ENCODE measurements at regions of chr6 and their contacts with region 1.

Region 1: GRCh38 chr6:108052706-108053105 is 21.8 kb downstream of the OSTM1 start:
- DNase-seq: no peak
- H3K4me3 Mint-ChIP-seq: no peak overlapping the region
- H3K27ac Mint-ChIP-seq: no peak overlapping the region
- H3K4me1 Mint-ChIP-seq: no peaks in the 10 kb centered on the region
- H3K27me3 Mint-ChIP-seq: no peaks in the 10 kb centered on the region

Region 2: GRCh38 chr6:107866606-107867301 is 186.0 kb before region 1 on chr6:
- intact Hi-C with region 1: loop called (anchors 1 kb)
- DNase-seq: peak; percentile 81
- H3K4me3 Mint-ChIP-seq: no peak overlapping the region
- H3K27ac Mint-ChIP-seq: no peak overlapping the region
- H3K4me1 Mint-ChIP-seq: peaks cover 16% of the 10 kb centered on the region
- H3K27me3 Mint-ChIP-seq: peaks cover 4% of the 10 kb centered on the region

Region 3: GRCh38 chr6:107977283-107977682 is 75.4 kb before region 1 on chr6:
- intact Hi-C with region 1: loop called (anchors 1 kb)
- DNase-seq: no peak
- H3K4me3 Mint-ChIP-seq: no peak overlapping the region
- H3K27ac Mint-ChIP-seq: no peak overlapping the region
- H3K4me1 Mint-ChIP-seq: peaks cover 5% of the 10 kb centered on the region
- H3K27me3 Mint-ChIP-seq: peaks cover 21% of the 10 kb centered on the region

Region 4: DNA sequence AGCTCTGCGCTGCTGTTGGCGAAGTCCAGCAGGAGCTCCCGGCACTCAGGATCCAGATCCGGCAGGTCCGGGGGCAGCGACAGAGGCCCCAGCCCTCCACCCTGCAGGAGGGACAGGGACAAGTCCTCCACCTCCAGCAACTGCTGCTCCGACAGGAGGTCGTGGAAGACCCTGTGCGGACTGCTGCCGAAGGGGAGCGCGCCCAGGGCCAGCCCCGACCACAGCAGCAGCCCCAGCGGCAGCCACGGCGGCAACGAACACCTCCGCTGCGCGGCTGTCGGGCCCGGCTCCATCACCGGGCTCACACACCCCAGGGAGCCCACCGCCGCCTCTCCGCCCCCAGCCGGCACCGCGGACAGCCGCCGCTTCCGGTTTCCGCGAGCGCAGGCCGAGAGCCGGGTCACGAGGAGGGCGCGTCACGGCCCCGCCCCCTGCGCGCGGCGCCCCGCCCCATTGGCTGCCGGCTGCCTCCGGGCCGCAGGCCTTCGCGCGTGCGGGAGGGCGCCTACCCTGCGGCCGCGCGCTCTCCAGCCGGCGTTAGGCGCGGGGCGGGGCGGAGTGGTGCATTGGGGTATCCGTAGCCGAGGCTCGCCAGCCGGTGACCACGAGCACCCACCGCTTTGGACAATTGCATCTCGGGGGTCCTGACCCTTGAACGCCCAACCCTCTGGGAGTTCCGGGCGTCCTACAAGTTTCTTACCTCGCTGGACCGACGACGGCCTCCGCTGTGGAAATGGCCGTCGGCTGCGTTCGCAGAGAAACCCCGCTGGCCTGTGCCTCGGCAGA is 21.8 kb after region 1 on chr6 and contains the start of gene OSTM1:
- intact Hi-C with region 1: no loop called
- DNase-seq: peak; percentile 99
- H3K4me3 Mint-ChIP-seq: peak within 1 kb of the TSS; percentile 81
- H3K27ac Mint-ChIP-seq: peak within 1 kb of the TSS; percentile 69
- H3K4me1 Mint-ChIP-seq: peaks cover 12% of the 10 kb centered on the region
- H3K27me3 Mint-ChIP-seq: peaks cover 21% of the 10 kb centered on the region
- total RNA-seq, gene OSTM1: 14.6 and 16.8 TPM in 2 replicates